Activated B cell treated with CpG ODN at 0.5 μM for 24 hours (primary cell): ENCODE measurements at regions of chr15 and their contacts with region 1.

Region 1: DNA sequence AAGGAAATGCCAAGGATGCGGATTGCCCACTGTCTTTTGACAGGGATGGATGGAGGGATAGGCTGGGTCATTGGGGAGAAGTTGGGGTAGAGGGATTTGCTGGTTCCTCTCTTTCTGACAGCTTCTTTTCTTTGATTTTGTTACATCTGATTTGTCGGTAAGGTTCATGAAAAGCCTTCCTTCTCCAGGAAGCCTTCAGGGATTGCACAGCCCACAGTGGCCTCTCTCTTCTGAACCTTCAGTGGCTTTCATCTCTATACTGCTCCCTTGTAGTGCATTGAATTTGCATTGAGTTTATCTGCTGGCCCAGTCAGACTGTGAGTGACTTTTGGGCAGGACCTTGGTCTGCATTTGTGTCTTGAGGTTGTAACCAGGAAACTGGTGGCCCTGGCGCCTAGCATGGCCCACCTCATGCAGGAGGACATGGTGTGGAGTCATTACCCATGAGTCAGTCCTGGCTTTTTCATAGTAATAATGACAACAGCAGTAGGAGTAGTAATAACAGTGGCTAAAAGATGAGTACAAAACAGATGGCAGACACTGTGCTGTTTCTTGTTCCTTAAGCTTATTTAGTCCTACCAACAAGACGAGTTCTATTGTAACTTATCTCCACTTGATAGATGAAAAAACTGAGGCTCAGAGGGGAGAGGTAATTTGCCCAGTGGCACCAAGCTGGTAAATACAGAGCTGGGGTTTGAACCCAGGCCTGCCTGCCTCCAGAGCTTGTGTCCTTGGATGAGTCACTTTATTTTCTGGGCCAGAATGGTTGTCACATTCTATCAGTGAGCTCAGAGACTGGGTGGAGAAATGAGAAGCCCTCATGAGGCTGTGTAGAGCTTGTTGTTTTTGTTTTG is 28.4 kb downstream of the SMAD6 start:
- DNase-seq: no peak
- ATAC-seq: no peak
- H3K4me3 Mint-ChIP-seq: no peak overlapping the region
- H3K27ac Mint-ChIP-seq: no peak overlapping the region
- H3K4me1 Mint-ChIP-seq: no peaks in the 10 kb centered on the region
- H3K27me3 Mint-ChIP-seq: peaks cover 2% of the 10 kb centered on the region
- CTCF ChIP-seq: no peak

Region 2: GRCh38 chr15:66638377-66638776 is 92.0 kb before region 1 on chr15:
- CTCF ChIA-PET with region 1: no interaction called
- POLR2A ChIA-PET with region 1: no interaction called
- intact Hi-C with region 1: no loop called
- DNase-seq: no peak
- ATAC-seq: no peak
- H3K4me3 Mint-ChIP-seq: no peak overlapping the region
- H3K27ac Mint-ChIP-seq: no peak overlapping the region
- H3K4me1 Mint-ChIP-seq: no peaks in the 10 kb centered on the region
- H3K27me3 Mint-ChIP-seq: no peaks in the 10 kb centered on the region
- CTCF ChIP-seq: no peak

Region 3: DNA sequence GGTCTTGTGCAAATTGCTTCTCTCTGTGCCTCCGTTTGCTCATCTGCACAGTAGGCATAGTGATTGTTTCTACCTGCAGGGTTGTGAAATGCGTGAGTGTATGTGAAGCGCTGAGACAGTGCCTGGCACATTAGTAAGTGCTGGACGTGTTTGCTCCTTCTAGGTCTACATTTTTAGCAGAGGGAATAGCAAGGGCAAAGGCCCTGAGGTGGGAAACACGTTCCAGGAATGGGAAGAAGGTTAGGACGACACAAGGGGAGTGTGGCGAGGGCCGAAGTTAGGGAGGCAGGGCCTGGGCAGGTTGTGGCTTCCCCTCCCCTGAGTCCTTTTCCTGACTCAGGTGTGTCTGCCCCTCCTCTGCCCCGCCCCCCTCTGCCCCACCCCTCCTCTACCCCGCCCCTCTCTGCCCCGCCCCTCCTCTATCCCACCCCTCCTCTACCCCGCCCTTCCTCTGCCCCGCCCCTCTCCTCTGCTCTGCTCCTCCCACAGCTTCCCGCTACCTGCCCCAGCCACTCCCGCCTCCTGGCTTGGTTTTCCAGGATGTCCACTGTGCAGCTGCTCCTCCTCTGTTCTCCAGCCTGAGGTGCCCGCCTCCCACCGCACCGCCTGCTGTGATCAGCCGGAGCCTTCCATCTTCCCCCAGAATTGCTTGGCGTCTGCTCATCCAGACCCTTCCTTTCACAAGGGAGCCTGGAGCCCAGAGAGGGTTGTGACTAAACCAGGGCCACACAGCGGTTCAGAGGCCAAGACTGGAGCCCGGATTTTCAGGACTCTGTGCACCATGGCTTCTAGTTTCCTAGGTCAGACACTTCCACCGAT is 59.4 kb before region 1 on chr15:
- CTCF ChIA-PET with region 1: no interaction called
- POLR2A ChIA-PET with region 1: interaction called, 11 read pairs
- intact Hi-C with region 1: no loop called
- DNase-seq: no peak
- ATAC-seq: no peak
- H3K4me3 Mint-ChIP-seq: no peak overlapping the region
- H3K27ac Mint-ChIP-seq: no peak overlapping the region
- H3K4me1 Mint-ChIP-seq: peaks cover 6% of the 10 kb centered on the region
- H3K27me3 Mint-ChIP-seq: peaks cover 3% of the 10 kb centered on the region
- CTCF ChIP-seq: no peak

Region 4: DNA sequence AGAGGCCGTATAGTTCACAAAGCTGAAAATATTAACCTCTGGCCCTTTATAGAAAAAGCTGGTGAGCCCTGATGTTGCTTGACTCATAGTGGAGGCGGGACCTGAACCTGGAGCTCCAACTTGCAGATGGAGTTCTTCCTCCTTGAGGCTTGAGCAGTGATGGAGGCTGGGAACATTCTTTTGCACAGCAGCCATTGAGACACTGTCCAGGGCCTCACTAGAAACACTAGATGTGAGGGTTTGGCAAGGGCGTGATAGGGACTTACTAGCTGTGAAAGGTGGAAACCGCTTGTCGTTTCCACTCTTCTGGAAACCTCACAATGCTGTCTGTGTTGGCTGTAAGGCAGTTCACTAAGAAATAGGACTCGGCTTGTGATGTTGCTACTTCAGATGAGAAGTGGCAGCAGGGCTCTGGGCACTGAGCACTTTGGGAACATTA is 15.8 kb before region 1 on chr15:
- CTCF ChIA-PET with region 1: no interaction called
- POLR2A ChIA-PET with region 1: no interaction called
- intact Hi-C with region 1: no loop called
- DNase-seq: no peak
- ATAC-seq: no peak
- H3K4me3 Mint-ChIP-seq: no peak overlapping the region
- H3K27ac Mint-ChIP-seq: no peak overlapping the region
- H3K4me1 Mint-ChIP-seq: peaks cover 17% of the 10 kb centered on the region
- H3K27me3 Mint-ChIP-seq: peaks cover 25% of the 10 kb centered on the region
- CTCF ChIP-seq: no peak